Psoas muscle (tissue), 8 donors: ENCODE measurements at regions of chr2 and their contacts with region 1.

Region 1: GRCh38 chr2:10408649-10409579 is 39.2 kb downstream of the ODC1 start:
- DNase-seq: peak; percentile 74 to 86
- ATAC-seq: peak; percentile 49 to 66 (median 58)
- H3K4me3 ChIP-seq: no peak overlapping the region
- H3K27ac ChIP-seq: peak overlapping the region; percentile 14
- H3K4me1 ChIP-seq: peaks cover 49% of the 10 kb centered on the region
- H3K27me3 ChIP-seq: no peaks in the 10 kb centered on the region
- CTCF ChIP-seq: peak; percentile 96

Region 2: DNA sequence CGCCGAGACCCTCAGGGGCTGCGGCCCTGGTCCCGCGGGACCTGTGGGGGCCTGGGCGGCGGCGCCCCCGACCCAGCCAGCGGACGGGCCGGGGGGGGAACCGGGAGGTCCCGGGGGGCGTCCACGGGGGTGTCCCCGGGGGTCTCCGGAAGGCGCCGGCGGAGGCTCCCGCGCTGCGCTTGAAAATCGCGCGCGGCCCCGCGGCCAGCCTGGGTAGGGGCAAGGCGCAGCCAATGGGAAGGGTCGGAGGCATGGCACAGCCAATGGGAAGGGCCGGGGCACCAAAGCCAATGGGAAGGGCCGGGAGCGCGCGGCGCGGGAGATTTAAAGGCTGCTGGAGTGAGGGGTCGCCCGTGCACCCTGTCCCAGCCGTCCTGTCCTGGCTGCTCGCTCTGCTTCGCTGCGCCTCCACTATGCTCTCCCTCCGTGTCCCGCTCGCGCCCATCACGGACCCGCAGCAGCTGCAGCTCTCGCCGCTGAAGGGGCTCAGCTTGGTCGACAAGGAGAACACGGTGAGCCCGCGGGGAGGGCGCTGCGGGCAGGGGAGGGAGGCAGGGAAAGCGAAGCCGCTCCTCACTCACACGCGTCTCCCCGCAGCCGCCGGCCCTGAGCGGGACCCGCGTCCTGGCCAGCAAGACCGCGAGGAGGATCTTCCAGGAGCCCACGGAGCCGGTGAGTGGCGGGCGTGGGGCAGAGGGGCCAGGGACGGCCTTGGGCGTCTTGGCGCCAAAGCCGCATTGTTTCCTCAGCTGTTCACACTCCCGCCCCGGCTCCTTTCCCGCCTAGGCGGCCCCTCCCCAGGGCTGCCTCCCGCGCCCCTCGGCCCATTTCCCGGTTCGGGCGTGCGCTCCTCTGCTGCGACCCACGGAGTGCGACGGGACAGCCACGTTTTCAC is 286.3 kb before region 1 on chr2 and contains the start of gene RRM2:
- intact Hi-C with region 1: loop called (anchors 1 to 5 kb)
- DNase-seq: peak; percentile 91 to 97
- ATAC-seq: peak; percentile 89 to 92 (median 90)
- H3K4me3 ChIP-seq: peak within 1 kb of the TSS; percentile 69
- H3K27ac ChIP-seq: no peak within 1 kb of the TSS
- H3K4me1 ChIP-seq: peaks cover 27% of the 10 kb centered on the region
- H3K27me3 ChIP-seq: peaks cover 0 to 12% (median 2%) of the 10 kb centered on the region in 3 donors
- CTCF ChIP-seq: no peak
- total RNA-seq, gene RRM2: 0.27 to 1.3 TPM in 2 of 4 donors, not detected in the others

Region 3: GRCh38 chr2:10141736-10142642 is 266.9 kb before region 1 on chr2:
- intact Hi-C with region 1: loop called (anchors 5 kb)
- DNase-seq: no peak
- ATAC-seq: peak; percentile 54 to 80 (median 65)
- H3K4me3 ChIP-seq: no peak overlapping the region
- H3K27ac ChIP-seq: no peak overlapping the region
- H3K4me1 ChIP-seq: no peaks in the 10 kb centered on the region
- H3K27me3 ChIP-seq: no peaks in the 10 kb centered on the region
- CTCF ChIP-seq: peak; percentile 28

Region 4: GRCh38 chr2:10331027-10331701 is 77.8 kb before region 1 on chr2:
- intact Hi-C with region 1: no loop called
- DNase-seq: peak; percentile 66 to 80
- ATAC-seq: peak; percentile 30 to 71 (median 44)
- H3K4me3 ChIP-seq: peak overlapping the region; percentile 5
- H3K27ac ChIP-seq: no peak overlapping the region
- H3K4me1 ChIP-seq: peaks cover 18% of the 10 kb centered on the region
- H3K27me3 ChIP-seq: no peaks in the 10 kb centered on the region
- CTCF ChIP-seq: no peak

Region 5: GRCh38 chr2:10548626-10549025 is 139.7 kb after region 1 on chr2:
- intact Hi-C with region 1: no loop called
- DNase-seq: no peak
- ATAC-seq: peak in 1 of 4 donors; percentile 30
- H3K4me3 ChIP-seq: no peak overlapping the region
- H3K27ac ChIP-seq: no peak overlapping the region
- H3K4me1 ChIP-seq: no peaks in the 10 kb centered on the region
- H3K27me3 ChIP-seq: peaks cover 0 to 28% (median 5%) of the 10 kb centered on the region in 3 donors
- CTCF ChIP-seq: no peak